Activated CD8-positive, alpha-beta memory T cell treated with anti-CD3 and anti-CD28 coated beads, Interleukin-2, amount 10 ng/mL, durations not matched to agents 7 days and 5 days (primary cell): ENCODE measurements at regions of chr6 and their contacts with region 1.

Region 1: DNA sequence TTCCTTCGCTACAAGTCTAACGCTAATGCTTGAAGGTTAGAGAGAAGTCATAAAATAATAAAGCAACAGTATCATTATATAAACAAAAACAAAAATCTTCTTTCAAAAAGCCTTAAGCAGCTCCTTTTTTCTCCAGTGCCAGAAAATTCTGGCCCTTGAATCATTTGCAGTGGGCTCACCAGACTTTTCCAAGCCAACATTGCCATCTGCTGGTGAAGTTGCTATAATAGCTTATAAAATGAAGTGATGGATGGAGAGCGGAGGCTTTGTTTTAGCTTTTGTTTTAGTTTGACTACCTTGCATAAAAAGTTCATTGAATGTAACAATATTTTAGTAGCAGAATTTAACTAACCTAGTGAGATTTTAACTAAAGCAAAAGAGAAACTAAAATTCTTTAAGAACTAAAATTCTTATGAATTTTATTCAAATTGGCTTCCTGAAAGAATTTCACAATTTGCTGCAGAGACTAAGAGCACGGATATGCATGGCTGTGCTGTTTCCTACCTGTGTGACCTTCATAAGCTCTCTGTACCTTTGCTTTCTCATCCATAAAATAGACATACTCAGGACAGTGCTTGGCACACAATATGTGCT is 44.8 kb upstream of the SLC2A12 start:
- DNase-seq: peak; percentile 74
- ATAC-seq: no peak
- H3K4me3 Mint-ChIP-seq: no peak overlapping the region
- H3K27ac Mint-ChIP-seq: no peak overlapping the region
- H3K4me1 Mint-ChIP-seq: peaks cover 7% of the 10 kb centered on the region
- H3K27me3 Mint-ChIP-seq: peaks cover 27% of the 10 kb centered on the region

Region 2: GRCh38 chr6:133837801-133838349 is 259.3 kb before region 1 on chr6:
- CTCF ChIA-PET with region 1: interaction called, 11 read pairs
- DNase-seq: peak; percentile 70
- ATAC-seq: peak; percentile 78
- H3K4me3 Mint-ChIP-seq: peak overlapping the region; percentile 43
- H3K27ac Mint-ChIP-seq: no peak overlapping the region
- H3K4me1 Mint-ChIP-seq: peaks cover 6% of the 10 kb centered on the region
- H3K27me3 Mint-ChIP-seq: peaks cover 22% of the 10 kb centered on the region

Region 3: GRCh38 chr6:133945158-133945557 is 152.1 kb before region 1 on chr6:
- CTCF ChIA-PET with region 1: interaction called, 16 read pairs
- DNase-seq: no peak
- ATAC-seq: no peak
- H3K4me3 Mint-ChIP-seq: no peak overlapping the region
- H3K27ac Mint-ChIP-seq: no peak overlapping the region
- H3K4me1 Mint-ChIP-seq: peaks cover 2% of the 10 kb centered on the region
- H3K27me3 Mint-ChIP-seq: peaks cover 18% of the 10 kb centered on the region

Region 4: GRCh38 chr6:134063966-134064445 is 33.2 kb before region 1 on chr6:
- CTCF ChIA-PET with region 1: interaction called, 29 read pairs
- DNase-seq: peak; percentile 66
- ATAC-seq: peak; percentile 91
- H3K4me3 Mint-ChIP-seq: no peak overlapping the region
- H3K27ac Mint-ChIP-seq: no peak overlapping the region
- H3K4me1 Mint-ChIP-seq: no peaks in the 10 kb centered on the region
- H3K27me3 Mint-ChIP-seq: peaks cover 2% of the 10 kb centered on the region

Region 5: DNA sequence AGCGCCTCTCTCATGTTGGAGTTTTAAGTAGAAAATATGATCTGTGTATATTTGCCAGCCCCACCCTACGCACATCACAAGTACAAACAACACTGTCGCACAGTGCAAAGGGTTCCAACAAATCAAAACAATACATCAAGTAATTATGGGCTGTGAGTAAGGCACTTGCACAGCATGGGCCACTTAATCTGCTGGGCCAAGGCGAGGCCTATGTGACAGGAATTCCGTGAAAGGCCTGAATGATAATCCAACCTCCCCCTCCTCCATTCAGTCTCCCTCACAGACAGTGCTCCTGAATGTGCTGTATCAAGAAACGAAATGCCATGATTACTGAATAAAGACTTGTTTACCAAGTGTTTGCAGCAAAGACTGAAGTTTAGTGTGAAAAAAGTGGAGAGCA is 85.3 kb after region 1 on chr6:
- CTCF ChIA-PET with region 1: no interaction called
- DNase-seq: no peak
- ATAC-seq: no peak
- H3K4me3 Mint-ChIP-seq: no peak overlapping the region
- H3K27ac Mint-ChIP-seq: no peak overlapping the region
- H3K4me1 Mint-ChIP-seq: peaks cover 15% of the 10 kb centered on the region
- H3K27me3 Mint-ChIP-seq: no peaks in the 10 kb centered on the region

Region 6: GRCh38 chr6:134216301-134217010 is 119.2 kb after region 1 on chr6:
- CTCF ChIA-PET with region 1: no interaction called
- DNase-seq: no peak
- ATAC-seq: no peak
- H3K4me3 Mint-ChIP-seq: no peak overlapping the region
- H3K27ac Mint-ChIP-seq: no peak overlapping the region
- H3K4me1 Mint-ChIP-seq: no peaks in the 10 kb centered on the region
- H3K27me3 Mint-ChIP-seq: no peaks in the 10 kb centered on the region